ENCODE measurements at regions of chr17 and their contacts with region 1.

Region 1: GRCh38 chr17:34420254-34420766 is 57.3 kb upstream of the CCL1 start:
- DNase-seq: peak; percentile 59 to 88
- H3K4me3 ChIP-seq: no peak overlapping the region
- H3K27ac ChIP-seq: no peak overlapping the region
- H3K4me1 ChIP-seq: peaks cover 0 to 10% (median 4%) of the 10 kb centered on the region in 4 experiments; a peak in 4 of 7 replicates
- H3K27me3 ChIP-seq: no peaks in the 10 kb centered on the region; a peak in 1 of 7 replicates
- CTCF ChIP-seq: peak; percentile 65 to 93 (median 92)
- EP300 ChIP-seq: no peak
- POLR2A ChIP-seq: no peak
- RAD21 ChIP-seq: peak; percentile 97 to 98

Region 2: DNA sequence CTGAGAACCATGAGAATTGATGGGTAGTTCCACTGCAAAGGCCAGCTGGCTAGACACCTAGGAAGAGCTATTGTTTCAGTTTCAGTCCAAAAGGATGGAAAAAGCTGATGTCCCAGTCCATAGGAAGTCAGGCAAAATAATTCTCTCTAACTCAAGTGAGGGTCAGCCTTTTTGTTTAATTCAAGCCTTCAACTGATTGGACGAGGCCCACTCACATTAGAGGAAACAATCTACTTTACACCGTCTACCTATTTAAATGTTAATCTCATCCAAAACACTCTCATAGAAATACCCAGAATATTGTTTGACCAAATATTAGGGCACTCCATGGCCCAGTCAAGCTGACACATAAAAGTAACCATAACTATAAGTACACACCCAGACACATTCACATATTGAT is 78.4 kb before region 1 on chr17:
- CTCF ChIA-PET with region 1: no interaction called
- POLR2A ChIA-PET with region 1: no interaction called
- DNase-seq: no peak
- H3K4me3 ChIP-seq: no peak overlapping the region
- H3K27ac ChIP-seq: no peak overlapping the region
- H3K4me1 ChIP-seq: no peaks in the 10 kb centered on the region
- H3K27me3 ChIP-seq: no peaks in the 10 kb centered on the region
- CTCF ChIP-seq: no peak
- EP300 ChIP-seq: no peak
- POLR2A ChIP-seq: no peak
- RAD21 ChIP-seq: no peak

Region 3: DNA sequence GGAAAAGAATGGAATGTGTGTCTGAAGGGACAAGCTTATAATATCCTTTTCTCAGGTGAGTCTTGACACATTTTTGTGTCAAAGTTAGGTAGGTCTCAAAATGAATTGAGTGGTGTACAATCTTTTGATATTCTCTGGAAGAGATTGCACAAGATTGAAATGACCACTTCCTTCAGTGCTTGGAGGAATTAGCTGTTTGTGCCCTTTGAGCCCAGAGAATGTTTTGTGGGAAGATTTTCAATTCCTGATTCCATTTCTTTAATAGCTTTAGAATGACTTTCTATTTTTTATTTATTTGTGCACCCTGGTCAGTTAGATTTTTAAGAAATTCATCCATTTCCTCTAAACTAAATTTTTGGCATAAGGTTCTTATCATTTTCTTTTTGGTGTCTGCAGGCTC is 65.7 kb before region 1 on chr17:
- CTCF ChIA-PET with region 1: no interaction called
- POLR2A ChIA-PET with region 1: no interaction called
- DNase-seq: no peak
- H3K4me3 ChIP-seq: no peak overlapping the region
- H3K27ac ChIP-seq: no peak overlapping the region
- H3K4me1 ChIP-seq: peaks cover 0 to 3% (median 0%) of the 10 kb centered on the region in 4 experiments; a peak in 1 of 7 replicates
- H3K27me3 ChIP-seq: no peaks in the 10 kb centered on the region
- CTCF ChIP-seq: no peak
- EP300 ChIP-seq: no peak
- POLR2A ChIP-seq: no peak
- RAD21 ChIP-seq: no peak

Region 4: GRCh38 chr17:34368196-34368945 is 51.9 kb before region 1 on chr17:
- CTCF ChIA-PET with region 1: no interaction called
- POLR2A ChIA-PET with region 1: no interaction called
- DNase-seq: peak in 1 of 2 experiments; percentile 30
- H3K4me3 ChIP-seq: no peak overlapping the region
- H3K27ac ChIP-seq: no peak overlapping the region
- H3K4me1 ChIP-seq: no peaks in the 10 kb centered on the region
- H3K27me3 ChIP-seq: no peaks in the 10 kb centered on the region
- CTCF ChIP-seq: no peak
- EP300 ChIP-seq: no peak
- POLR2A ChIP-seq: no peak
- RAD21 ChIP-seq: no peak

Region 5: GRCh38 chr17:34436607-34437006 is 16.3 kb after region 1 on chr17:
- CTCF ChIA-PET with region 1: interaction called, 49 read pairs
- POLR2A ChIA-PET with region 1: no interaction called
- DNase-seq: no peak
- H3K4me3 ChIP-seq: no peak overlapping the region
- H3K27ac ChIP-seq: no peak overlapping the region
- H3K4me1 ChIP-seq: no peaks in the 10 kb centered on the region; a peak in 2 of 7 replicates
- H3K27me3 ChIP-seq: no peaks in the 10 kb centered on the region; a peak in 1 of 7 replicates
- CTCF ChIP-seq: peak; percentile 18 to 49 (median 23); a peak in 3 of 4 replicates
- EP300 ChIP-seq: no peak
- POLR2A ChIP-seq: no peak
- RAD21 ChIP-seq: peak; percentile 47 to 56

Region 6: GRCh38 chr17:34503528-34504145 is 83.3 kb after region 1 on chr17:
- CTCF ChIA-PET with region 1: interaction called, 11 read pairs
- POLR2A ChIA-PET with region 1: no interaction called
- DNase-seq: no peak
- H3K4me3 ChIP-seq: no peak overlapping the region
- H3K27ac ChIP-seq: no peak overlapping the region
- H3K4me1 ChIP-seq: no peaks in the 10 kb centered on the region
- H3K27me3 ChIP-seq: peaks cover 0 to 15% (median 1%) of the 10 kb centered on the region in 4 experiments; a peak in 3 of 7 replicates
- CTCF ChIP-seq: no peak
- EP300 ChIP-seq: no peak
- POLR2A ChIP-seq: no peak
- RAD21 ChIP-seq: no peak